GM12878 (cell line): ENCODE measurements at regions of chr11 and their contacts with region 1.

Region 1: DNA sequence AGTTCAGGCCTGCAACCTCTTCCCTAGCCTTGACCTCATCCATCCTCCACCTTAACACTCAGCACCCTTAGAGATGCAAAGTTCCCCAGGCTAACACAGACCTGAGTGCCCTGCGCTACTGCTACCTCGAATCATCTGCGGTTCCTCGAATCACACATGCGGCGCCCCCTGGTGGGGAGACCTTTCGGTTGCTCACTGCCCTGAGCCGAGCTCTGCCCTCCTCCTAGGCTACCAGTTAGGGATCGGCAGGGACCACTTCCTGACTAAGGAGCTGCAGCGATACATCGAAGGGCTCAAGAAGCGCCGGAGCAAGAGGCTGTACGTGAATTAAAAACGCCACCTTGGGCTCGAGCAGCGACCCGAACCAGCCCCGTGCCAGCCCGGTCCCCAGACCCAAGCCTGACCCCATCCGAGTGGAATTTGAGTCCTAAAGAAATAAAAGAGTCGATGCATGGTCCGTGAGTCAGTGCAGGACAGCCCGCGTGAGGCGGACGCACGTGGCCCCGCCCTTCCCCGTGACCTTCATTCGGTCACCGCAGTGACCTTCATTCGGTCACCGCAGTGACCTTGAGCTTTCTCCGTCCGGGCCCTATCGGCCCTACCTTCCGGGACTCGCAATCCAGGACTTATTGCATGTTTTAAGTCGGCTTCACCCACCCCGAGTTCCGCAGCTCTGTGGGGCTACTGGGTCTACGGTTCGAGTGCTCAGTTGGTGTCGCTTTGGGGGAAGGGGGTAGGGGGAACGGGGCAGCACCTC is 830 bp upstream of the ESRRA start:
- DNase-seq: peak; percentile 78
- ATAC-seq: peak; percentile 72
- H3K4me3 ChIP-seq: peak overlapping the region; percentile 72
- H3K27ac ChIP-seq: peak overlapping the region; percentile 90
- H3K4me1 ChIP-seq: peaks cover 27% of the 10 kb centered on the region
- H3K27me3 ChIP-seq: peaks cover 5 to 13% of the 10 kb centered on the region in 2 experiments; a peak in 3 of 4 replicates
- CTCF ChIP-seq: peak; percentile 89 to 94 (median 93); a peak in 5 of 6 replicates
- EP300 ChIP-seq: no peak
- POLR2A ChIP-seq: 0 out of 2 replicates have a peak, but pooled peaks have one; percentile 57
- RAD21 ChIP-seq: peak; percentile 41

Region 2: DNA sequence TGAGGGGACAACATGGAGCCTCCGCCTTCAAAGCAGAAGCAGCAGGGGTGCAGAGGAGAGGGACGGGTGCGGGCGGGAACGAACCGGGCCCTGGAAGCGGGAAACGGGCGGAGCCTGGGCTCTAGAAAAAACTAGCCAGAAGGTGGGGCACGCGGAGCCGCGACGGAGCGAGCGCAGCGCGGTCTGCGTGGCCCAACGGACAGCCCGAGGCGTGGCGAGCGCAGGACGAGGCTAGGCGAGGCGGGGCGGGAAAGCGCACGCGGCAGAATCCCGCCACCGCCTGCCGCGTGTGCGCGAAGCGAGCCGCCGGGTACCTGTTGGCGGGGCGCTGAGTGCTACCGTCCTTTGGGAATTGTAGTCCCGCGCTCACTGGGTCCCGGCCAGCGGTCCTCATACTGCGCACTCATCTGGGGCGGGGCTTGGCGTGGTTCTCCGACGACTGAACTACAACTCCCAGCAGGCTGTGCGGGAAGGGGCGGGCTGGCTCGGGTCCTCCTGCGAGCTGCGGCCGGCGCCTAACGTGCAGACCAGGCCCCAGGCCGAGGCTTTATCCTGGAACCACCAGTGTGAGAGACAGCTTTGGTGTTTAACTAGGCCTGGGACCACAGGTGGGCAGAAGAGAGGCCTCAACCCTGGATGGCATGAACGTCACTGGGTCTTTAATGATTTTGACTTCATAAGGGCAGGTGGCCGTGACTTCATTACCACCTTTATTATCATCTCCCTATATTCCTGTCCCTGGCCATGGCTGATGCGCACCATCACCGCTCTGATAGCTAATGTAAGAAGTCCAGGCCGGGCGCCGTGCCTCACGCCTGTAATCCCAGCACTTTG is 633.0 kb before region 1 on chr11 and contains the start of gene ATL3:
- CTCF ChIA-PET with region 1: no interaction called
- POLR2A ChIA-PET with region 1: no interaction called
- RAD21 ChIA-PET with region 1: no interaction called
- SMC1A ChIA-PET with region 1: no interaction called
- in situ Hi-C with region 1: no loop called
- intact Hi-C with region 1: loop called (anchors 5 kb)
- DNase-seq: peak; percentile 85
- ATAC-seq: peak; percentile 92
- H3K4me3 ChIP-seq: peak within 1 kb of the TSS; percentile 89
- H3K27ac ChIP-seq: peak within 1 kb of the TSS; percentile 81
- H3K4me1 ChIP-seq: peaks cover 8% of the 10 kb centered on the region
- H3K27me3 ChIP-seq: no peaks in the 10 kb centered on the region
- CTCF ChIP-seq: peak in 1 of 3 experiments; percentile 20; a peak in 1 of 6 replicates
- EP300 ChIP-seq: no peak
- POLR2A ChIP-seq: peak; percentile 88
- RAD21 ChIP-seq: no peak
- polyA plus RNA-seq, gene ATL3: 12.0 to 15.4 TPM

Region 3: GRCh38 chr11:64246871-64247728 is 57.4 kb before region 1 on chr11 and contains the start of gene PPP1R14B:
- CTCF ChIA-PET with region 1: interaction called, 64 read pairs
- POLR2A ChIA-PET with region 1: interaction called, 7 read pairs
- RAD21 ChIA-PET with region 1: interaction called, 9 read pairs
- SMC1A ChIA-PET with region 1: interaction called, 3 read pairs
- in situ Hi-C with region 1: no loop called
- intact Hi-C with region 1: loop called (anchors 2 kb)
- DNase-seq: no peak
- ATAC-seq: peak; percentile 75
- H3K4me3 ChIP-seq: peak within 1 kb of the TSS; percentile 91
- H3K27ac ChIP-seq: peak within 1 kb of the TSS; percentile 90
- H3K4me1 ChIP-seq: peaks cover 17% of the 10 kb centered on the region
- H3K27me3 ChIP-seq: no peaks in the 10 kb centered on the region
- CTCF ChIP-seq: 0 out of 6 replicates have a peak, but pooled peaks of 1 of the 3 experiments have one; percentile 6
- EP300 ChIP-seq: no peak
- POLR2A ChIP-seq: peak; percentile 13
- RAD21 ChIP-seq: no peak
- polyA plus RNA-seq, gene PPP1R14B: 8.4 to 27.7 TPM

Region 4: GRCh38 chr11:64276653-64277431 is 27.7 kb before region 1 on chr11:
- CTCF ChIA-PET with region 1: interaction called, 147 read pairs
- POLR2A ChIA-PET with region 1: interaction called, 61 read pairs
- RAD21 ChIA-PET with region 1: interaction called, 34 read pairs
- SMC1A ChIA-PET with region 1: interaction called, 41 read pairs
- in situ Hi-C with region 1: no loop called
- intact Hi-C with region 1: no loop called
- DNase-seq: no peak
- ATAC-seq: no peak
- H3K4me3 ChIP-seq: no peak overlapping the region
- H3K27ac ChIP-seq: no peak overlapping the region
- H3K4me1 ChIP-seq: 0 out of 2 replicates have a peak, but pooled peaks cover 2% of the 10 kb centered on the region
- H3K27me3 ChIP-seq: no peaks in the 10 kb centered on the region
- CTCF ChIP-seq: no peak
- EP300 ChIP-seq: no peak
- POLR2A ChIP-seq: no peak
- RAD21 ChIP-seq: no peak

Region 5: DNA sequence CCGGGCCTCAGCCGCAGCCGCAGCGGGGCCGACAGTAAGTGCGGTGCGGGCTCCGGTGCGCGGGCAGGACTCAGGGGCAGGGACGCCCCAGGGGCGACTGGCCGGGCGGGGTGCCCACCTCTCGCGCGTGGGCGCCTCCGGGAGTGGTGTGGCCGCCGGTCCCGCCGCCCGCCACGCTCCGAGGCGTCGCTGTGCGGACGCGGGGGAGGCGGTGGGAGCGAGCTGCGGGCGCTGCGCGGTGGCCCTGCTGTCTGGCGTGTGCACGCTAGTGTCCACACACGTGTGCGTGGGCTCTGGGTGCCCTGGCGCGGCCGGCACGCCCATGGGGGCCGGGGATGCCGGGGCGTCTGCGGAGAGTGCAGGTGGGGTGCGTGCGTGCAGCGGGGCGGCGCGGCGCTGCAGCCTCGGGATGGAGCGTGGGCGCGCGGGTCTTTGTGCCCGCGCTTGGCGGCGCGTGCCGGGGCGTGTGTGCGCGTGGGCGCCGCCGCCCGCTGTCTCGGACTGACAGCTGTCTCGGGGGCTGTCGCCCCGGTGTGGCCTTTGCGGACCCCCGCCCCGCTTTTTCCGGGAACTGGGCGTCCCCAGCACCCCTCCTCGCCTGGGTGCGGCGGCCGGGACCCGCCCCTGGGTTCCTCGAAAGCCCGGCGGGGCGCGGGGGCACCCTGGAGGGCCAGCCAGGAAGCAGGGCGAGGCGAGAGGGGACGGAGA is 12.6 kb before region 1 on chr11:
- CTCF ChIA-PET with region 1: interaction called, 10 read pairs
- POLR2A ChIA-PET with region 1: interaction called, 4 read pairs
- RAD21 ChIA-PET with region 1: no interaction called
- SMC1A ChIA-PET with region 1: interaction called, 3 read pairs
- in situ Hi-C with region 1: no loop called
- intact Hi-C with region 1: no loop called
- DNase-seq: no peak
- ATAC-seq: peak; percentile 20; the same call in 2 of the 3 replicates
- H3K4me3 ChIP-seq: no peak overlapping the region
- H3K27ac ChIP-seq: no peak overlapping the region
- H3K4me1 ChIP-seq: no peaks in the 10 kb centered on the region
- H3K27me3 ChIP-seq: peaks cover 6 to 14% of the 10 kb centered on the region in 2 experiments
- CTCF ChIP-seq: no peak
- EP300 ChIP-seq: no peak
- POLR2A ChIP-seq: no peak
- RAD21 ChIP-seq: no peak

Region 6: DNA sequence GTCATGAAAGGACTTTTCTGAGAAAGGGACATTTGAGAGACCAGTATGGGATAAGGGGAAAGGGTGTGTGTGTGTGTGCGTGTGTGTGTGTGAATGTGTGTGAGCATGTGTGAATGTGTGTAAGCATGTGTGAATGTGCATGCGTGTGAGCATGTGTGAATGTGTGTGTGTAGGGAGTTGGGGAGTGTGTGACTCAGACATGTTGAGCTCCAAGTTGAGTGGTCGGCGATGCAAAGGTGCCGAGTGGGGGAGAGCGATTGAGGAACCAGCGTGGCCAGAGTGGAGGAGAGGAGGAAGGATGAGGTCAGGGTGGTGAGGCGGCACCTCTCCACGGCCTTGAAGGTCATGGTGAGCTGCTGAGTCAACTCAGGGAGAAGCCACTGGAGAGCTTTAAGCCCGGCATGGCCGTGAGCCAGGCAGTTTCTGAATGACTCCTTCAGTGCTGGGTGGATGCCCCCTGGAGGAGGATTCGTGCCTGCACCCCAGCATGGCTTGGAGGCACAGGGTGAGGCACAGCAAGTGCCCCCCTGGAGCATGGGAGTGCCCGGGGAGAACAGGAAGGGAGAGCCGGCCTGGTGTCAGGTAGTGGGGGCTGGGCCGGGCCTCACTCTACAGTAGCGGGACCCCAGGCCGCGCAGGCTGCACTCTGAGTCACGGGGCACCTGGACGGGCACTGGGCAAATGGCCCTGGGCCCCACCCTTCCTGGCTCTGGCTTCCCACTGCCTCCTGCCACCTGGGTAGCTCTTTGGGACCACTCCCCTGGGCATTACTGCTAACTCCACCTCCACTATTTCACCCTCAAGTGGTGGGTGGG is 27.3 kb after region 1 on chr11:
- CTCF ChIA-PET with region 1: interaction called, 43 read pairs
- POLR2A ChIA-PET with region 1: interaction called, 11 read pairs
- RAD21 ChIA-PET with region 1: interaction called, 15 read pairs
- SMC1A ChIA-PET with region 1: interaction called, 8 read pairs
- in situ Hi-C with region 1: no loop called
- intact Hi-C with region 1: loop called (anchors 1 kb)
- DNase-seq: peak; percentile 80
- ATAC-seq: peak; percentile 80
- H3K4me3 ChIP-seq: no peak overlapping the region
- H3K27ac ChIP-seq: peak overlapping the region; percentile 52
- H3K4me1 ChIP-seq: peaks cover 21% of the 10 kb centered on the region
- H3K27me3 ChIP-seq: no peaks in the 10 kb centered on the region
- CTCF ChIP-seq: peak; percentile 78 to 86 (median 82)
- EP300 ChIP-seq: peak in 1 of 2 experiments; percentile 68; a peak in 1 of 4 replicates
- POLR2A ChIP-seq: peak; percentile 53; the same call in 1 of the 2 replicates
- RAD21 ChIP-seq: peak; percentile 53

Region 7: DNA sequence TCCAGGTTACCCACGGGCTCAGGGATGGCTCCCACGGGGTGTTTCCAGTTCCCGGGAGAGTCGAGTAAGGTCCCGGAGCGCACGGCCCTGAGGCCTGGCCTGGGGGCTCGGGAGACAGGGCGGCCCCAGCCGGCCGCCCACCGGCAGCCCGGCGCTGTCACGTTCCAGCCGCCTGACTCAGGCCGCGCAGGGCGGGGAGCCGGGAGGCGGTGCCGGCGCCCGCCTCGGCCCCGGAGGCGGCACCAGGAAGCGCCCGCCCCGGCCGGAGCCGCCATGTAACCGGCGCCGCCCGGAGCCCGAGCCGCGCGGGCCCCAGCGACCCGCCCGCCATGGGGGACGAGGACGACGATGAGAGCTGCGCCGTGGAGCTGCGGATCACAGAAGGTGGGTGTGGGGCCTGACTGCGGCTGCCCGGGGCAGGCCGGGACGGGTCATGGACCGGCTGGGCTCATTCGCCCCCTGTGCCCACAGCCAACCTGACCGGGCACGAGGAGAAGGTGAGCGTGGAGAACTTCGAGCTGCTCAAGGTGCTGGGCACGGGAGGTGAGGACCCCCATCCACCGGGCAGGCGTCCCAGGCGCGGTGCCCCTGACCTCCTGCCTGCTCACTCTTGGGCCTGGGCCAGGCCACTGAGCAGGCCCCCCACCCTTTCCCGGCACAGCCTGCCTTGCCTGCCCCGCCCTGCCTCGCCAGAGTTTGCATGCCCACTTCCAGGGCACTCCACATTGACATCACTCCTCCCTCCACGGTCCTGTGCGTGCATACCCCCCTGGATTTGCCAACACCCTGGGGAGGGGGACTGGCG is 54.6 kb after region 1 on chr11 and contains the start of gene RPS6KA4:
- CTCF ChIA-PET with region 1: interaction called, 74 read pairs
- POLR2A ChIA-PET with region 1: interaction called, 6 read pairs
- RAD21 ChIA-PET with region 1: interaction called, 19 read pairs
- SMC1A ChIA-PET with region 1: interaction called, 4 read pairs
- in situ Hi-C with region 1: no loop called
- intact Hi-C with region 1: no loop called
- DNase-seq: no peak
- ATAC-seq: peak; percentile 85
- H3K4me3 ChIP-seq: peak within 1 kb of the TSS; percentile 69
- H3K27ac ChIP-seq: peak within 1 kb of the TSS; percentile 72
- H3K4me1 ChIP-seq: peaks cover 36% of the 10 kb centered on the region
- H3K27me3 ChIP-seq: no peaks in the 10 kb centered on the region
- CTCF ChIP-seq: no peak
- EP300 ChIP-seq: no peak
- POLR2A ChIP-seq: peak; percentile 82
- RAD21 ChIP-seq: no peak
- polyA plus RNA-seq, gene RPS6KA4: 0.34 to 0.73 TPM

Region 8: GRCh38 chr11:64369440-64370211 is 65.1 kb after region 1 on chr11:
- CTCF ChIA-PET with region 1: no interaction called
- POLR2A ChIA-PET with region 1: no interaction called
- RAD21 ChIA-PET with region 1: no interaction called
- SMC1A ChIA-PET with region 1: no interaction called
- in situ Hi-C with region 1: no loop called
- intact Hi-C with region 1: no loop called
- DNase-seq: no peak
- ATAC-seq: no peak
- H3K4me3 ChIP-seq: no peak overlapping the region
- H3K27ac ChIP-seq: no peak overlapping the region
- H3K4me1 ChIP-seq: peaks cover 3% of the 10 kb centered on the region; the same call in 1 of the 2 replicates
- H3K27me3 ChIP-seq: no peaks in the 10 kb centered on the region
- CTCF ChIP-seq: no peak
- EP300 ChIP-seq: no peak
- POLR2A ChIP-seq: no peak
- RAD21 ChIP-seq: no peak